Cardiac septum (tissue), 1 donor: ENCODE measurements at regions of chr7 and their contacts with region 1.

Region 1: DNA sequence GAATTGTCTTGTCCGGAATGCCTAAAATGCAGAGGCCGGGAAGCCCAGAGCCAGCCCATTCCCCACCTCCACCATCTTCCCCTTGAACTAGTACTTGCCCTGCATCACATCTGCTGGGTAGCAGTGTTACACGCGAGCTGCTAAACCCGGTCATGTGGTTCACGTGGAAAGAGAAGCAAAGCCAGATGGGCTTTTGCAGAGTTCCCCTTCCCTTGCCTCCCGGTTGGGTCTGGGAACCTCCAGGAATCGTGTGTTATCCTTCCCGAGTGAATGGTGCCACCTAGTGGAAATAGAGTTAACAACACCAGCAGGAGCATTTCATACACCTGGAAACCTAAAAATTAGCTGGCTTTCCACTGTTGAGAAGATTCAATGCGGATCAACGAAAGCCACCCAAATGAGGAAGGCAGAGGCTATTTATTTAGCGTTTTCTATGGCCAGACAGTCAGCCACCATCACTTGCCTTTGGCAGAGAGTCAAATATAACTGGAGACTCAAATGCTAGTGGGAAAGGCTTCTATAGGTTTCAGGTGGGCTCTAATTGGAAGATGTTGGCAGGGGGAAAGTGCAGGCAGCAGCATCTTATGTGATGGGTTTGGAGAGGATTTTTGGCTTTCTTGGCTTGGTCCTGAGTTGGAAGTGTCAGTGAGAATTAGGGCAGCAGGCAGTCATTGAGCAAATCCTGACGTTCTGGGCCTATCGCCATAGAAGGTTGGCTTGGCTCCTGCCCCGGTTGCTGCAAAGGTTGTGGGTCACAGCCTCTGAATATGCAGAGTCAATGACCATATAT is 12.9 kb upstream of the DENND2A start:
- DNase-seq: peak; percentile 77

Region 2: DNA sequence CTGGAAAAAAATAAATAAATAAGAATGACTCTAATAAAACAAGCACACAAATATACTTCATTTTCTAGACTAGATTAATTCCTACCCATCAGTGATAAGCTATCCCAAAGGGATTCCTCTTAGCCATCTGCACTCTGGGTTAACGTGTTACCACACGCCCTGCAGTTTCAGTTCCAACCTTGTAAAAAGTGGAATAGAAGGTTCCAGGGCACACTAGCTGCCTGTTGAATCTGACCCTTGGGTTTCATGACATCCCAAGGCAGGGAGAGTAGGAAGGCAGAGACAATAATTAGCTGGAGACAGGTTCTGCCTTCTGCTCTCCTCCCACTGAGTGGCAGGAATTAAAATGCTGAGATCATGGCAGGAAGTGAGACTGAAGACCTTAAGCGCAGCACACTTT is 288.7 kb before region 1 on chr7:
- intact Hi-C with region 1: no loop called
- DNase-seq: no peak

Region 3: GRCh38 chr7:140479062-140479738 is 174.3 kb before region 1 on chr7 and contains the start of gene MKRN1:
- intact Hi-C with region 1: loop called (anchors 2 kb)
- DNase-seq: peak; percentile 98
- total RNA-seq, gene MKRN1: 95.0 TPM

Region 4: GRCh38 chr7:140738280-140738679 is 84.8 kb after region 1 on chr7:
- intact Hi-C with region 1: no loop called
- DNase-seq: no peak